HAP-1 (cell line): ENCODE measurements at regions of chr2 and their contacts with region 1.

Region 1: DNA sequence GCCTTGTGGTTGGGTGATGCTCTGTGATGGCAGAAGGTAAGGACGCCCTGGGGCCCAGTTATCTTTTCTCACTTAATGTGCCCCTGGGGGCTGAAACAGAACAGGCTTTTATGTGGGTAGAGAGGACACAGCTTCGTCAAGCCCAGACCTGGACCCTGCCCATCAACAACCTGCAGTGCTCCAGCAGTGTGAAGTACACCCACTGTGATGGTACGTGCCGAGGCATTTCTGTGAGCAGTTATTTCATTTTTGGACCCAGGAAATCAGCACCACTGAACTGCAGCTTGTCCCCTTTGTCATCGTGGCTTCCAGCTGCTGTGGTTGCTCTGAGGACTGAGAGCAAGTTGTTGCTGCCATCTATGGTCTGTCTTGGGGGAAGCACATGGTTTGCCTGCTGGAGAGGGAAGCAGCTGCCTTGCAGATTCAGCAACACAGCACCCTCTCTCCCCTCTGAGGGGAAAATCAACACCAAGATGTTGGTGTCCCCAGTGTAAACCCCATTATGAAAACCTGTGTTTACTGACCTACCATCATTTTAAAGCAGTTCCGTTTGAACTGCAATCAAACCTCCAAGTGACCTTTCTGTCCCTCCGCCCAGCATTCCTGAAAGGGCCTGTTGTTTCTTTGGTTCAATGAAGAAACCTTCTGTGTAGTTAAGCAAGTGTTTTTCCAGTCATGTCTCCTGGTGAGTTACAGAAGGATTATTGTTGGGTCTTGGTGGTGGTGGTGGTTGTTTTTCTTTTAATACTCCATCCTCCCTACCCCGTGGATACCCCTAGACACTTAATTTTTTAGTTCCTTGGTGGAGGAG is 158.2 kb downstream of the MGAT5 start:
- DNase-seq: peak; percentile 62 to 71
- H3K4me3 ChIP-seq: no peak overlapping the region
- H3K4me1 ChIP-seq: peaks cover 9% of the 10 kb centered on the region
- H3K27me3 ChIP-seq: no peaks in the 10 kb centered on the region

Region 2: GRCh38 chr2:133886735-133887660 is 525.0 kb before region 1 on chr2:
- in situ Hi-C with region 1: loop called (anchors 25 kb)
- DNase-seq: peak; percentile 56 to 73
- H3K4me3 ChIP-seq: no peak overlapping the region
- H3K4me1 ChIP-seq: no peaks in the 10 kb centered on the region
- H3K27me3 ChIP-seq: no peaks in the 10 kb centered on the region

Region 3: GRCh38 chr2:134118279-134119116 is 293.5 kb before region 1 on chr2:
- in situ Hi-C with region 1: loop called (anchors 5 kb)
- DNase-seq: peak; percentile 87 to 93
- H3K4me3 ChIP-seq: no peak overlapping the region
- H3K4me1 ChIP-seq: peaks cover 19% of the 10 kb centered on the region
- H3K27me3 ChIP-seq: 0 out of 2 replicates have a peak, but pooled peaks cover 2% of the 10 kb centered on the region

Region 4: DNA sequence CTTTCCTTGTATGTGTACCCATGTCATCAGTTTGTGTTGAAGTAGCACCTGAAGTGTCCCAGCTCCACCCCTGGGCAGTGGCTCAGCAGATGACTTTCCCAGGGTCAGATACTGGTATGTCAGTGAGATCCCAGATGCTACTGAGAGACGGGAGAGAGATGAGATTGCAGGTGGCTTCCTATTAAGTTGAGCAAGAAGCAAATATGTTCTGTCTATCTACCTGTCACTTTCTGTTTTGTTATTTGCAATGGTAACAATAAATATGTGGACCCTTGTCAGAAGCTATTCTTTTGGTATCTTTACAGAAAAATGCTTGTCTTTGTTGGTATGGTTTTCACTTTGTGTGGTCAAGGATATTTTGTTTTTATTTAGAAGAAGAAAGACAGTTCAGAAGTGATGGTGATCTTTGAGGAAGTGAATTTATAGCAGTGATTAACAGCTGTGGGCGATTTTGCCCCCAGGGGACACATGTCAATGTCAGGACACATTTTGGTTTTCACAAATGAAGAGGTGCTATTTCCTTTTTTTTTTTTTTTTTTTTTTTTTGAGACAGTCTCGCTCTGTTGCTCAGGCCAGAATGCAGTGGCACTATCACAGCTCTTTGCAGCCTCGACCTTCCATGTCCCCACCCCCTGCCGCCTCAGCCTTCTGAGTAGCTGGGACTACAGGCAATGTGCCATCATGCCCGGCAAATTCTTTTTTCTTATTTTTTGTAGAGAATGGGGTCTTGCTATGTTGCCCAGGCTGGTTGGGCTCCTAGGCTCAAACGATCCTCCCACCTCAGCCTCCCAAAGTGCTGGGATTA is 136.8 kb before region 1 on chr2:
- in situ Hi-C with region 1: no loop called
- DNase-seq: peak in 1 of 2 experiments; percentile 29
- H3K4me3 ChIP-seq: no peak overlapping the region
- H3K4me1 ChIP-seq: peaks cover 19% of the 10 kb centered on the region
- H3K27me3 ChIP-seq: no peaks in the 10 kb centered on the region